Activated CD4-positive, alpha-beta memory T cell treated with anti-CD3 and anti-CD28 coated beads for 36 hours (primary cell): ENCODE measurements at regions of chr2 and their contacts with region 1.

Region 1: DNA sequence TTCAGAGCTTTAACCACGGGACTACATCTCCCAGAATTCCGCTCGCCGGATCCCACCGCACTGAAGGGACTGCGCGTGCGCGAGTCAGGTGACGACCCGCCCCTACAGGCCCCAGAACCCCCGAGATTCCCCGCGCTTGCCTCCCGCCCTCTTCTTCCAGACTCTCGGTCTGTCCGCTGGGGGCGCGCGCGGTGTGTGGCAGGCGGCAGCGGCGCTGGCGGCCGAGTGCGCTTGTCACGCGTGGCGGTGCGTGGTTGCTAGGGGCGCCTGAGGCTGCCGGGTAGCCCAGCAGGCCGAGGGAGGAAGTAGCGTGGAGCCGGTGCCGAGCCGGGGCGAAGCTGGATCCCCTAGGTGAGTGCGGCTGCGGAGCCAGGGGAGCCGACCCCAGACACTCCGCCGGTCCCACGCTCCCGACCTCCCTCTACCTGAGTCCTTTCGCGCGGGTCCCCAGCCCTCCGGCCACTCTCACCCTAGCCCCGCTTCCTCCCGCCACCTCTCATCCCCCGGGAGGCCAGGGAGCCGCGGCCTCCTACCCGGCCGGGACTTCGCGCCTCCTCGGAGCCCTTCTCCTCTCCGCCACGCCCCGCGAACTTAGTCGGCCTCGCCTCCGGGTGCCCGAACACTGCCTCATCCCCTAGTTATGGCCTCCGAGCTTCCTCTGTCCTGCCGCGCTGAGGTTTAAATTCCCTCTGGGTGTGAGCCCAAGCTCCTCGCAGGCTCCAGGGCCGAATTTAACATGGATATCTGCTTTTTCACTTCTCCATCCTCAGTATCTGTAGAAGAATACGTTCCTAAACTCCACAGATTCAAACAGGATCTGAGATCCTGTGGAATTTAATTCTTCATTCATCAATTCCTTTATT is at the start of gene TTLL4:
- DNase-seq: peak; percentile 99
- H3K4me3 Mint-ChIP-seq: peak within 1 kb of the TSS; percentile 88
- H3K27ac Mint-ChIP-seq: peak within 1 kb of the TSS; percentile 72
- H3K4me1 Mint-ChIP-seq: peaks cover 20% of the 10 kb centered on the region
- H3K27me3 Mint-ChIP-seq: no peaks in the 10 kb centered on the region
- total RNA-seq, gene TTLL4: 30.1 to 32.1 TPM

Region 2: DNA sequence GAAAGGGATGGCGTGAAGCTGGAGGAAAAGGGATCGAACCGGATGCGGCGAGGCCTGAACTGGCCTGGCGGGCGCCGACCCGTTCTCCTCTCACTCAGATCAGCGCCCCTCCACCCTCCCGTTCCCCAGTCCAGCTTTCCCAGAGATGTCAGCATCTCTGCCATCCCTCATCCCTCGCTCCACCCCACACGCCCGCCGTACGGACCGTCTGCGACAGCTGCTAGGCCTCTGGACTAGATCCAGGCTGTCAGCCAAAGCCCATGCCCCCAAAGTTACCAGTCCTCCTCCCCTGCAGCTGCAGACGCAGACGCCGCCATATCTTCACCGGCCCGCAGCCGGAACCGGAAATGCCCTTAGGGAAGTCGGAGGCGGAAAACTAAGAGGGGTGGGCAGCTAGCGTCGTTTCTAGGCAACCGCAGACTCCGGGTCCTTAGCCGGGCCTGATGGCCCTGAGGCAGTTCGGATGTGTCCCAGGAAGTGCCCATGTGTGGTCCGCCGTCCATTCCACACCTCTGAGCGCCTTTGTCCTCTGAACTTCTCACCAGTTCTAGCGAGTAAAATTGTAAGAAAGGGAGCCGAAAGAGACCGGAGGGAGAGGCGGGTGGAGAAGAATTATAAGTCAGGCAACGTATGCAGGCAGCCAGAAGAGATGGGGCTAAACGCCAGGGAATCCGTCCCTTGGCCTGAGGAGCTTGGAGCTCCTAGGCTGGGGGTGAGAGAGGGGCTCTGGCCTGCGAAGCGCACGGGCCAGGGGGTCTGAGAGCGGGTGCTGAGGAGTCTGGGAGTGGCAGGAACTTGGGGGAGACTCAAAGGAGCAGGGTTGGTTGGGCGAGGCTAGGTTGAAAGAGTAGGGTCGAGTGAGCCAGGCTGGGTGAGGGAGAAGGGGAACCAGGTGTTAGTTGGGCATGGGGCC is 39.0 kb before region 1 on chr2 and contains the starts of genes RNF25 and STK36:
- CTCF ChIA-PET with region 1: interaction called, 7 read pairs
- POLR2A ChIA-PET with region 1: interaction called, 3 read pairs
- intact Hi-C with region 1: loop called (anchors 1 kb)
- DNase-seq: peak; percentile 90
- H3K4me3 Mint-ChIP-seq: peak within 1 kb of the TSS; percentile 96
- H3K27ac Mint-ChIP-seq: peak within 1 kb of the TSS; percentile 89
- H3K4me1 Mint-ChIP-seq: peaks cover 22% of the 10 kb centered on the region
- H3K27me3 Mint-ChIP-seq: no peaks in the 10 kb centered on the region
- total RNA-seq, gene RNF25: 15.2 to 15.6 TPM
- total RNA-seq, gene STK36: 15.9 to 19.0 TPM

Region 3: DNA sequence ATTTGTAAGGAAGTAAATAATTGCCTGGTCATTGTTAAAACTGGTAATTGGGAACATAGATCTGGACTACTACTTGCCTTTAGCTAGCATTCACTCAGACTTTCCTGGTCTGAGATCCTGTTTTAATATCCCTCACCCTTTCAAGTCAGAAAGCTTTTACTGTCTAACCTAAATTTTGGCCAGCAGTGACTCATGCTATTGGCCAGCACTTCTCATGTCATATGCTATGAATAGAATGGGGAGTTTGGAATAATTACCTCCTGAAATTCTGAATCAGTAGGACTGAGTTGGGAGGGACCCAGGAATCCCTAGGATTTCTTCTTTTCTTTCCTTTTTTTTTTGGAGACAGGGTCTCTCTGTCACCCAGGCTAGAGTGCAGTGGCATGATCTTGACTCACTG is 19.7 kb before region 1 on chr2:
- CTCF ChIA-PET with region 1: interaction called, 10 read pairs
- POLR2A ChIA-PET with region 1: interaction called, 3 read pairs
- intact Hi-C with region 1: no loop called
- DNase-seq: no peak
- H3K4me3 Mint-ChIP-seq: no peak overlapping the region
- H3K27ac Mint-ChIP-seq: no peak overlapping the region
- H3K4me1 Mint-ChIP-seq: no peaks in the 10 kb centered on the region
- H3K27me3 Mint-ChIP-seq: no peaks in the 10 kb centered on the region

Region 4: DNA sequence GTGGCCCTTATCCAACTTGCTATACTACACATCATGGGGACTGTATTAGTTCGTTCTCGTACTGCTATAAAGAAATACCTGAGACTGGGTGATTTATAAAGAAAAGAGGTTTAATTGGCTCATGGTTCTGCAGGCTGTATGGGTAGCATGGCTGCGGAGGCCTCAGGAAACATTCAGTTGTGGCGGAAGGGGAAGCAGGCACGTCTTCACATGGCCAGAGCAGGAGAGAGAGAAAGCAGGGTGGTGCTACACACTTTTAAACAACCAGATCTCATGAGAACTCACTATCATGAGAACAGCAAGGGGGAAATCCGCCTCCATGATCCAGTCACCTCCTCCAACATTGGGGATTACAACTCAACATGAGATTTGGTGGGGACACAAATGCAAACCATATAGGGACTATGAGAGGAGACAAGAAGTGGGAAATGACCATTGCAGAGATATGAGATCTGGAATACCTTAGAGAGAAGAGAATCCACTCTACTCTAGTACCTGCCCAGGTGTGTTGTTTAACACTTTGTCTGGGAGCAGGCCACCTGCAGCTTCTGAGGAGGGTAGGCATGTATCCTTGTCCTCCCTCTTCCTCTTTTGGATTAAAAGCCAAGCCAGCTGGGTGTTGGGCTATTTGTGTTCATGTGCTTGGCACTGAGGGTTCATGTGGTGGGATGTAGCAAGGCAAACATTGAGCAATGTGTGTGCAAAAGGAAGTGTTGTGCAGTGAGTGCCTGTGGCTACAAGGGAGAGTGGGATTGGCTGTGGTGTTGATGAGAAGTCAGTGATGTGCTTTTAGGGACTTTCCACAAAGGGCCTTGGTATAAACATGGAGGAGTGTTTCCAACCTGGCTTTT is 22.5 kb after region 1 on chr2:
- CTCF ChIA-PET with region 1: interaction called, 5 read pairs
- POLR2A ChIA-PET with region 1: interaction called, 3 read pairs
- intact Hi-C with region 1: loop called (anchors 2 kb)
- DNase-seq: peak; percentile 63
- H3K4me3 Mint-ChIP-seq: no peak overlapping the region
- H3K27ac Mint-ChIP-seq: peak overlapping the region; percentile 19
- H3K4me1 Mint-ChIP-seq: peaks cover 28% of the 10 kb centered on the region
- H3K27me3 Mint-ChIP-seq: no peaks in the 10 kb centered on the region